ENCODE measurements at regions of chr6 and their contacts with region 1.

Region 1: DNA sequence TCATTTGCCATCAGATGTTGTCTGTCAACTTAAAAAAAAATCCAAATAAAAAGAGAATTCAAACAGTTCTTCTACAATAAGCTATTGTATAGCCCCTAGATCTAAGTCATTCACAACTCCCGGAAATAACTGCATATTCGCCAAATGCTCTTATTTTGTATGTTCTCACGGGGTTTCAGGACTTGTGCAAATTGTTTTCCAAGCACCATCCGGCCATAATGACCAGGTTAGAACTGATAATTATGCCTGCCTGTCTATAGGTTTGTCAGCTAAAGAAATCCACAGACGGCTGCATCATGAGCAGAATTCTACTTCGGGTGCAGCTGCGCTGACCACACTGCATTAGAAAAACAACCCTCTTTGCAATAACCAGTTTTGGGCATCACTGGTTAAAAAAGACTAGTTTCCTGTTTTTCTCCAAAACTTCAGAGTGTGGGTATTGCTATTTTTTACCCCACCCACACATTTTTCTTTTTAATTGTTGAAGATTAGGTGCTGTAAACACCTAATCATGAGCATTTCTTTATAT is 87.7 kb downstream of the HIVEP2 start:
- DNase-seq: peak in 5 of 9 experiments; percentile 27 to 69 (median 56)
- ATAC-seq: peak; percentile 25
- H3K4me3 ChIP-seq: peak overlapping the region; percentile 39 to 48
- H3K4me3 Mint-ChIP-seq: peak overlapping the region; percentile 78
- H3K27ac ChIP-seq: peak overlapping the region; percentile 70 to 77
- H3K27ac Mint-ChIP-seq: peak overlapping the region; percentile 97
- H3K4me1 ChIP-seq: peaks cover 86% of the 10 kb centered on the region
- H3K4me1 Mint-ChIP-seq: peaks cover 88% of the 10 kb centered on the region
- H3K27me3 ChIP-seq: no peaks in the 10 kb centered on the region
- H3K27me3 Mint-ChIP-seq: no peaks in the 10 kb centered on the region
- CTCF ChIP-seq: no peak

Region 2: GRCh38 chr6:142819603-142820337 is 37.5 kb before region 1 on chr6:
- CTCF ChIA-PET with region 1: no interaction called
- POLR2A ChIA-PET with region 1: interaction called, 3 read pairs
- intact Hi-C with region 1: loop called in 1 of 2 experiments (anchors 5 kb)
- DNase-seq: peak in 5 of 9 experiments; percentile 29 to 86 (median 47)
- ATAC-seq: peak; percentile 57
- H3K4me3 ChIP-seq: peak overlapping the region; percentile 31 to 48
- H3K4me3 Mint-ChIP-seq: peak overlapping the region; percentile 90
- H3K27ac ChIP-seq: peak overlapping the region; percentile 30 to 78
- H3K27ac Mint-ChIP-seq: peak overlapping the region; percentile 96
- H3K4me1 ChIP-seq: peaks cover 44% of the 10 kb centered on the region
- H3K4me1 Mint-ChIP-seq: peaks cover 76% of the 10 kb centered on the region
- H3K27me3 ChIP-seq: no peaks in the 10 kb centered on the region
- H3K27me3 Mint-ChIP-seq: no peaks in the 10 kb centered on the region
- CTCF ChIP-seq: no peak

Region 3: GRCh38 chr6:142871910-142872331 is 14.6 kb after region 1 on chr6:
- CTCF ChIA-PET with region 1: no interaction called
- POLR2A ChIA-PET with region 1: interaction called, 8 read pairs
- intact Hi-C with region 1: loop called in 1 of 2 experiments (anchors 1 kb)
- DNase-seq: peak in 7 of 9 experiments; percentile 35 to 90 (median 60)
- ATAC-seq: peak; percentile 85
- H3K4me3 ChIP-seq: no peak overlapping the region
- H3K4me3 Mint-ChIP-seq: no peak overlapping the region
- H3K27ac ChIP-seq: peak overlapping the region; percentile 25 to 39
- H3K27ac Mint-ChIP-seq: peak overlapping the region; percentile 93
- H3K4me1 ChIP-seq: peaks cover 70% of the 10 kb centered on the region
- H3K4me1 Mint-ChIP-seq: peaks cover 89% of the 10 kb centered on the region
- H3K27me3 ChIP-seq: no peaks in the 10 kb centered on the region
- H3K27me3 Mint-ChIP-seq: no peaks in the 10 kb centered on the region
- CTCF ChIP-seq: no peak

Region 4: GRCh38 chr6:142913511-142914047 is 56.3 kb after region 1 on chr6:
- CTCF ChIA-PET with region 1: no interaction called
- POLR2A ChIA-PET with region 1: interaction called, 10 read pairs
- intact Hi-C with region 1: no loop called
- DNase-seq: peak; percentile 39 to 92 (median 73)
- ATAC-seq: peak; percentile 90
- H3K4me3 ChIP-seq: peak overlapping the region; percentile 41 to 43
- H3K4me3 Mint-ChIP-seq: peak overlapping the region; percentile 82
- H3K27ac ChIP-seq: peak overlapping the region; percentile 78 to 95
- H3K27ac Mint-ChIP-seq: peak overlapping the region; percentile 99
- H3K4me1 ChIP-seq: peaks cover 74% of the 10 kb centered on the region
- H3K4me1 Mint-ChIP-seq: peaks cover 82% of the 10 kb centered on the region
- H3K27me3 ChIP-seq: no peaks in the 10 kb centered on the region
- H3K27me3 Mint-ChIP-seq: no peaks in the 10 kb centered on the region
- CTCF ChIP-seq: peak; percentile 50

Region 5: DNA sequence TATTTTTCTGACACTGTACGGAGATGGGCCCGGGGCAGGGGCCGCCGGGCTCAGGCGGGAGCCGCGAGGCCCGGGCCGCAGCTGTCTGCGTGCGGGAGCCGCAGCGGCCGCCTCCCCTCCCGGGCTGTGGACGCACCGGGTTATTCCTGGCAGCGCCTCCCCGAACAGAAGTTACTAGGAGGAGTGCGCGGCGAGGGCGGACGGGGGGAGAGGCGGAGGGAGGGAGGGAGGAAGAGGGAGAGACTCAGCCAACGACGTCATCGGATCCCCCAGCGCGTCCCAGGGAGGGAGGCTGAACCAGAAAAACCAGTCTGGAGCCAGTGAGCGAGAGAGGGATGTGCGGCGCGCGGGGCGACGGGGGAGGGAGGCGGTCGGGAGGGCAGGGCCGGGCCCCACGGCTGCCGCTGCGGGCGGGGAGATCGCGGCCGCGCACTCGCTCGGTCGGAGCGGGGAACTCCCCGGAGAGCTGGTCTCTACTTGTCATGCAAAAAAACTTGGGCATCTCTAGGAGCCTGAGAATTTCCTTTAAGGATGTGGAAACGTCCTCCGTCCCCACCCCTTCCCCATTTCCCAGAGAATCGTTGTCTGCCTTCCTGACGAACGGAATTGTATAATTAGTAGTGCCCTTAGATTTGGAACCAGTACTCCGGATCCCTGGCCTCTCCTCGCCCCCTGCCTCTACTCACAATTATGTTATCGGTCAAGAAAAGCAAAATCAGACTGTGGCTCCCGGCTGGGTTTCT is 89.1 kb after region 1 on chr6:
- CTCF ChIA-PET with region 1: interaction called, 4 read pairs
- POLR2A ChIA-PET with region 1: interaction called, 49 read pairs
- intact Hi-C with region 1: loop called (anchors 1 to 2 kb)
- DNase-seq: peak; percentile 79 to 98 (median 90)
- ATAC-seq: peak; percentile 41
- H3K4me3 ChIP-seq: peak overlapping the region; percentile 73 to 95
- H3K4me3 Mint-ChIP-seq: peak overlapping the region; percentile 99
- H3K27ac ChIP-seq: peak overlapping the region; percentile 96 to 97
- H3K27ac Mint-ChIP-seq: peak overlapping the region; percentile 96
- H3K4me1 ChIP-seq: peaks cover 27% of the 10 kb centered on the region
- H3K4me1 Mint-ChIP-seq: peaks cover 36% of the 10 kb centered on the region
- H3K27me3 ChIP-seq: no peaks in the 10 kb centered on the region
- H3K27me3 Mint-ChIP-seq: no peaks in the 10 kb centered on the region
- CTCF ChIP-seq: no peak

Region 6: DNA sequence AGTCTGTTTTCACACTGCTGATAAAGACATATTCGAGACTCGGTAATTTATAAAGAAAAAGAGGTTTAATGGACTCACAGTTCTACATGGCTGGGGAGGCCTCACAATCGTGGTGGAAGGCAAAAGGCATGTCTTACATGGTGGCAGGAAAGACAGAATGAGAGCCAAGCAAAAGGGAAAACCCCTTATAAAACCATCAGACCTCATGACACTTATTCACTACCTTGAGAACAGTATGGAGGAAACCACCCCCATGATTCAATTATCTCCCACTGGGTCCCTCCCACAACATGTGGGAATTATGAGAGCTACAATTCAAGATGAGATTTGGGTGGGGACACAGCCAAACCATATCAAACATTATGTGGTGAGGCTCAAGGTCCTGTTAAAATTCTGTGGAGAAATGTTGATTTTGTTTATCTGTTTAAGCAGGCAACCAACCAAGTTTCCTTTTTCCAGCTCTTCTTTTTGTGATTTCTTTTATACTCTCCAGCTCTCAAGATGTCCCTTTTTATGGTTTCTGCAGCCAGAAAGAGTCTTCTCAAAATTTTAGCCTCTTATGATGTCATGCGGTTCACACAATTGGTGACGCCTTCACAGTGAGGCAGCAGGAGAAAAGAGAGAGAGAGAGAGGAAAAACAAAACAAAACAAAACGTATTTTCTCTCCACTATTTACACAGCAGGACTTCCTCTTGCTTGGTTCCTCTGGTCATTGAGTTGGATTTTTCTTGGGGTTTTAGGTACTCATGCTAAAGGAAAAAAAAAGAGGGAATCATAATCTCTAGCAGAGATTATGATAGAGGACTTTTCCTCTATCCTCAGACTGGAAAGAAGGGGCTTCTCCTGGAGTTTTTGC is 221.4 kb after region 1 on chr6:
- CTCF ChIA-PET with region 1: no interaction called
- POLR2A ChIA-PET with region 1: no interaction called
- intact Hi-C with region 1: no loop called
- DNase-seq: no peak
- ATAC-seq: no peak
- H3K4me3 ChIP-seq: no peak overlapping the region
- H3K4me3 Mint-ChIP-seq: no peak overlapping the region
- H3K27ac ChIP-seq: no peak overlapping the region
- H3K27ac Mint-ChIP-seq: no peak overlapping the region
- H3K4me1 ChIP-seq: no peaks in the 10 kb centered on the region
- H3K4me1 Mint-ChIP-seq: no peaks in the 10 kb centered on the region
- H3K27me3 ChIP-seq: no peaks in the 10 kb centered on the region
- H3K27me3 Mint-ChIP-seq: no peaks in the 10 kb centered on the region
- CTCF ChIP-seq: no peak

Region 7: GRCh38 chr6:143498428-143498827 is 641.1 kb after region 1 on chr6:
- CTCF ChIA-PET with region 1: no interaction called
- POLR2A ChIA-PET with region 1: no interaction called
- intact Hi-C with region 1: no loop called
- DNase-seq: peak in 2 of 9 experiments; percentile 4 to 15
- ATAC-seq: no peak
- H3K4me3 ChIP-seq: no peak overlapping the region
- H3K4me3 Mint-ChIP-seq: no peak overlapping the region
- H3K27ac ChIP-seq: no peak overlapping the region
- H3K27ac Mint-ChIP-seq: peak overlapping the region; percentile 14
- H3K4me1 ChIP-seq: peaks cover 6% of the 10 kb centered on the region
- H3K4me1 Mint-ChIP-seq: peaks cover 13% of the 10 kb centered on the region
- H3K27me3 ChIP-seq: no peaks in the 10 kb centered on the region
- H3K27me3 Mint-ChIP-seq: no peaks in the 10 kb centered on the region
- CTCF ChIP-seq: no peak

Measured in CD8-positive, alpha-beta T cell (primary cell).